ENCODE measurements at regions of chr14 and their contacts with region 1.

Region 1: DNA sequence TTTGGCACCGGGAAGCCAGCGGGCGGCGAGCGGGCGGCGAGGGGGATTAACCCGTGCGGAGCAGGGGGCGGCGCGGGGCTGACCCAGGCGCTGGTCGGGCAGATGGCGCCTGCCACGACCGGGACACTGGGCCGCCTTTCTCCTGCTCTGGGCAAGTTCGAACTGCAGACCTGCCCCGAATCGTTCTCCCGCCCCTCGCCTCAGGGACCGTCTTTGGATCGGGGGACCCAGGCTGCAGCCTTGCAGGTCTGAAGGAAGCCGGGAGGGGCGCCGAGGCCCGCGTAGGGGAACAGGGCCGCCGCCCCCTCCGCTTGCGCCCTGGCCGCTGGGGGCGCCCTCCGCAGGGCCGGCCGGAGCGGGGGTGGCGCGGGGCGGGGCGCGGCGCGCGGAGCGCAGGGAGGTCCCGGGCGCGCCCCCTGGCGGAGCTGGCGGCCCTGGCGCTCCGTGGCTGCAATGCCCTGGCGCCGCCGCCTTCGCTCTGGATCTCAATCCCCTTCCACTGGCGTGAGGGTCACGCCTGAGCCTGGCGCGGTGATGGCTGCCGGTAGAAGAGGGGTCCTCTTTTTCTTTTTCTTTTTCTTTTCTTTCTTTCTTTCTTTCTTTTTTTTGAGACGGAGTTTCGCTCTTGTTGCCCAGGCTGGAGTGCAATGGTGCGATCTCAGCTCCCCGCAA is 449 bp upstream of the LTBP2 start:
- DNase-seq: peak; percentile 77 to 90 (median 86)
- ATAC-seq: peak; percentile 29 to 87 (median 78)
- H3K4me3 ChIP-seq: peak overlapping the region; percentile 46 to 92 (median 64)
- H3K27ac ChIP-seq: peak overlapping the region; percentile 41 to 81 (median 69)
- H3K4me1 ChIP-seq: peaks cover 0 to 44% (median 16%) of the 10 kb centered on the region in 12 donors
- H3K27me3 ChIP-seq: peaks cover 0 to 26% (median 7%) of the 10 kb centered on the region in 9 donors
- CTCF ChIP-seq: peak; percentile 42 to 89 (median 70)
- POLR2A ChIP-seq: no peak

Region 2: DNA sequence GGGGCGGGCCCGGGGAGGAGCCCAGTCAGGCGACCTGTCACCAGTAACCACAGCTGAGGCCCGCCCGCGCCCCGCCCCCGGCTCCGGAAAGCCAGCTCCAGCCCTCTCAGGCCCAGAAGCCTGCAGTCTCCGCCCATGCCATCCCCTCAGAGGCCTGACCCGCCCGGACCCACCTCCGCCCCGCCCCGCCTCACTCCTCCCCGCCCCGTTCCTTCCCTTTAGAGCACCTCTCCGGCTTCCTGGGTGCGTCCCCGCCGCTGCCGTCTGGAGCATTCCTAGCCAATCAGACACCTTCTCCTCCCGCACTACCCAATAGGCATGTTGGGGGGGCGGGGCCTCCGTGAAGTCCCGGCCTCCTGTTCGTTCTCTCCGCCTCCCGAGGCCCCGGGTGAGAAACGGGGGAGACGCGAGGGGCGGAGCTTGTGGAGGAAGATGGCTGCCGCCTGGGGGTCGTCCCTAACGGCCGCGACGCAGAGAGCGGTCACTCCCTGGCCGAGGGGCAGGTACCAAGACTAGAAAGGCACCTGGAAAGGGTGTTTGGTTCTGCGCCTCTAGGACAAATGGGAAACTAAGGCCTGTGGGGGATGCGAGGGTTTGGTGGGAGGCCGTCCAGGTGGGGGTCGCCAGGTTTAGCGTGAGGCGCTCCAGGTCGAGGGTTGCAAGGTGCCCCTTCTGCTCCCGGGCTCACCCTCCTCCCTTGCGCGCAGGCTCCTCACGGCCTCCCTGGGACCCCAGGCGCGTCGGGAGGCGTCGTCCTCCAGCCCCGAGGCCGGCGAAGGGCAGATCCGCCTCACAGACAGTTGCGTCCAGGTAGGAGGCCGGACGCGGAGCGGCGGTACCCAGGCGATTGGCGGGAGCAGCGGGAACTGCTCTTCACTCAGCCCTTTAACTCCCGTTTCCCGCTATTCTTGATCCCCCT is 118.9 kb before region 1 on chr14 and contains the start of gene ISCA2:
- intact Hi-C with region 1: loop called in 1 of 10 experiments (anchors 10 kb)
- DNase-seq: peak; percentile 100
- ATAC-seq: peak; percentile 95 to 98 (median 98)
- H3K4me3 ChIP-seq: peak within 1 kb of the TSS; percentile 74 to 97 (median 88)
- H3K27ac ChIP-seq: peak within 1 kb of the TSS; percentile 82 to 98 (median 92)
- H3K4me1 ChIP-seq: peaks cover 0 to 62% (median 40%) of the 10 kb centered on the region in 12 donors
- H3K27me3 ChIP-seq: no peaks in the 10 kb centered on the region
- CTCF ChIP-seq: peak in 2 of 12 donors; percentile 2 to 6
- POLR2A ChIP-seq: peak in 1 of 2 donors; percentile 55
- total RNA-seq, gene ISCA2: 10.8 to 45.8 (median 36.2) TPM

Region 3: DNA sequence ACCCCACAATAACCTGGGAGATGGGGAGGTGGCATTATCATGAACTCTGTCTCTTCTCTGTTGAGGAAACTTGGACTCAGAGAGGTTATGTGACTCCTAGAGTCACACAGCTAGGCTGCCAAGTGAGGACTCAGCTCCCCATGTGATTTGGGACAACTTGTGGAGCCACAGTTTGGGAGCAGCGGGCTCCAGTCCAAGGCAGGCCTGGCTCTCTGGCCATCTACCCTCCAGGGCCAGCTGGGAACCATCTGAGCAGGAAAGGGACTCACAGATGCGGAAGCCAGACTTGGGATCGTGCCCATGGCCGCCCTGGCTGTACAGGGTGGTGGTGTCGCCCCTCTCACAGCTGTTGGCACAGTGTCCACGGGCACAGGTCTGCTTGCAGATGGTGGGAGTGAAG is 59.9 kb before region 1 on chr14:
- intact Hi-C with region 1: loop called in 2 of 10 experiments (anchors 5 to 10 kb)
- DNase-seq: peak; percentile 59 to 88 (median 80)
- ATAC-seq: peak in 3 of 4 donors; percentile 8 to 57 (median 35)
- H3K4me3 ChIP-seq: no peak overlapping the region
- H3K27ac ChIP-seq: peak overlapping the region in 9 of 12 donors; percentile 11 to 70 (median 49)
- H3K4me1 ChIP-seq: peaks cover 0 to 47% (median 31%) of the 10 kb centered on the region in 12 donors
- H3K27me3 ChIP-seq: no peaks in the 10 kb centered on the region
- CTCF ChIP-seq: no peak
- POLR2A ChIP-seq: no peak

Region 4: GRCh38 chr14:74667758-74668157 is 55.3 kb after region 1 on chr14:
- intact Hi-C with region 1: loop called in 1 of 10 experiments (anchors 10 kb)
- DNase-seq: no peak
- ATAC-seq: no peak
- H3K4me3 ChIP-seq: no peak overlapping the region
- H3K27ac ChIP-seq: no peak overlapping the region
- H3K4me1 ChIP-seq: peaks cover 0 to 23% (median 9%) of the 10 kb centered on the region in 12 donors
- H3K27me3 ChIP-seq: no peaks in the 10 kb centered on the region
- CTCF ChIP-seq: no peak
- POLR2A ChIP-seq: no peak

Region 5: DNA sequence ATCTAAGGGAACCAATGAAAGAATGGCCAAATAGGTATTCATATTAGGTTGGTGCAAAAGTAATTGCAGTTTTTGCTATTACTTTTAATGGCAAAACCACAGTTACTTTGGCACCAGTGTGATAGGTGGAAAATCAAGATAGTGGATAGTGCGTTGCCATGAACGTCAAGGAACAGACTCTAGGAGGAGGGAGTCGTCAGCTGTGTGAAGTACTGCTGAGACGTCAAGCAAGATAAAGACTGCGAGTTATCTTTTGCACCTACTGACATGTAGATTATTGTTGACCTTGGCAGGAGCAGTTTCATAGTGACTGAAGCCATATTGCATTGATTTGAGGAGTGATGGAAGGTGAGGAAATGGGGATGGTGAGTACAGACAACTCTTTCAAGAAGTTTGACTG is 158.9 kb after region 1 on chr14:
- intact Hi-C with region 1: loop called in 1 of 10 experiments (anchors 10 kb)
- DNase-seq: no peak
- ATAC-seq: peak in 2 of 4 donors; percentile 60 to 71
- H3K4me3 ChIP-seq: no peak overlapping the region
- H3K27ac ChIP-seq: no peak overlapping the region
- H3K4me1 ChIP-seq: peaks cover 0 to 30% (median 17%) of the 10 kb centered on the region in 12 donors
- H3K27me3 ChIP-seq: no peaks in the 10 kb centered on the region
- CTCF ChIP-seq: no peak
- POLR2A ChIP-seq: no peak

Region 6: GRCh38 chr14:74804219-74804826 is 191.8 kb after region 1 on chr14:
- intact Hi-C with region 1: loop called in 7 of 10 experiments (anchors 2 to 10 kb)
- DNase-seq: no peak
- ATAC-seq: peak in 2 of 4 donors; percentile 56
- H3K4me3 ChIP-seq: no peak overlapping the region
- H3K27ac ChIP-seq: no peak overlapping the region
- H3K4me1 ChIP-seq: no peaks in the 10 kb centered on the region
- H3K27me3 ChIP-seq: no peaks in the 10 kb centered on the region
- CTCF ChIP-seq: peak; percentile 19 to 64 (median 40)
- POLR2A ChIP-seq: no peak